ENCODE measurements at regions of chr15 and their contacts with region 1.

Region 1: DNA sequence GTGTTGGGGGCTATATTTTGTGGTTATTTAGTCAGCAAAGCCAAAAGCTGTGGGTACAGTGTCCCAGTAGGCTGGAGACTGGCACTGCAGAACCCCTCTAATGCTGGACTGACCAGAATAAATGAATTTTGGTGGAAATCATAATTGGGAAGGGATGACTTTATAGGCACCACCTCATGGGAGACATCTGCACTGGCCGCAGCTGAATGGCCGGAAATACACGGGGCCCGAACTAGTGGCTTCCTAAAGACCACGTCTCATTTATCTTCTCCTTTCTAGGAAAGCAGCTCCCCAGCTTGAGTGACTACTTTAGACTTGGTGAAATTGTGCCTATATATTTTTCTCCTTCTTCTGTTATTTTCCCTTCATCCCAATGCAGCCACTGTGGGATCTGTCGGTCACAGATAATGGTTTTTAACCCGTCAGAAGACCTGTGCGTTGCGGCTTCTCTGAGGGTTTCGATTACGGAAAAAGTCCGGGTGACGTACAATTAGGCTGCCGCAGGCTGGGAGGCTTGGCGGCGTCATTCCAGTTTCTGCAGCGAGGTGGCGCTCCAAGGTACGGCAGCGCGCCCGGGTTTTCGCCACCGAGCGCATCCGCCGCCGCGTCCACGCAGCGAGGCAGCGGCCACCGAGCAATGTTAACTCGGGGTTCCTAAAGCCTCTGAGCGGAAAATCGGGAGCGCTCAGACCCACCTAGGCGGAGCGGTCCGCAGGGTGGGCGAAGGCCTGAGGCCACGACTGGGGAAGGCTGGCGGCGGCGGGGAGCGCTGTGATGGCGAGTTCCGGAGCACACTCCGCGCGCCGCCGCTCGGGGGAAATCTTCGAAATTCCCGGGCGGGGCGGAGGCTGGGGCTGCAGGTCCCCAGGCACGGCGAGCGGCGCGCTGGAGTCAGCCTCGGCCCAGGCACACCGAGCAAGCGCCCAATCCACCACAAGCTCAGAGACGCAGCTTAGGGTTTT is 26.3 kb downstream of the NR2F2 start:
- DNase-seq: peak; percentile 96
- H3K4me3 Mint-ChIP-seq: no peak overlapping the region
- H3K27ac Mint-ChIP-seq: no peak overlapping the region
- H3K4me1 Mint-ChIP-seq: peaks cover 32% of the 10 kb centered on the region
- H3K27me3 Mint-ChIP-seq: no peaks in the 10 kb centered on the region
- CTCF ChIP-seq: peak; percentile 97

Region 2: GRCh38 chr15:95025924-95026728 is 1330.6 kb before region 1 on chr15:
- CTCF ChIA-PET with region 1: interaction called, 3 read pairs
- intact Hi-C with region 1: loop called (anchors 2 kb)
- DNase-seq: peak; percentile 78
- H3K4me3 Mint-ChIP-seq: no peak overlapping the region
- H3K27ac Mint-ChIP-seq: no peak overlapping the region
- H3K4me1 Mint-ChIP-seq: peaks cover 7% of the 10 kb centered on the region
- H3K27me3 Mint-ChIP-seq: no peaks in the 10 kb centered on the region
- CTCF ChIP-seq: peak; percentile 75

Region 3: DNA sequence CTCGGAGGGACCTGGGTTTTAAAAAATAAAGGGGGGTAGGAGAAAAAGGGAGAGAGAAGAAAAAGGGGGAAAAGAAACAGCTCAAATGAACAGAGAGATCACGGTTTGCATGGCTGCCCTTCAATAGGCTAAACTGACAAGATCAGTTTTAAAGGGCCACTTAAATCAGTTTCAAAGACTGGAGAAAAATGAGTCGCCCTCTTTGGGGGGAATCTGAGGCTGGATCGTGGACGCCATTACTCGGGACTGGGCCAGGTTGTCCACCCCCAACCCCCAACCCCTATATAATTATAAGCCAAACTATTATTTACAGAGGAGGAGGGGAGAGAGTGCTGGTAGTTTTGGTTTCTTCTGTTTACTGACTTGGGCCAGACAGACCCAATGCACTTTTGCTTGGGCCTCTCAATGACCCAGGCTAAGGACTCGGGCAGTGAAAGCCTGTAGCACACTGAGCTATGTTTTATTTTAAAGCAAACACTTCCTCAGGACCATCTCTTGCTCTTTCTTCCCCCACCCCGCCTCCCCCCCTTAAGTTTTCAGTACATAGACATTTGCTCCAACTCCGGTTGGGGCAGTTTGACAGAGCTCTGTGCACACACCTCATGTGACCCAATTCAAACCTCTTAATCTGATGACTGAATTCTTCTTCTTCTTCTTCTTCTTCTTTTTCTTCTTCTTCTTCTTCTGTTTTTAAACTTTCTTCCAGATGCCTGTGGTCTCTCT is 20.0 kb before region 1 on chr15:
- CTCF ChIA-PET with region 1: interaction called, 5 read pairs
- intact Hi-C with region 1: loop called (anchors 2 kb)
- DNase-seq: no peak
- H3K4me3 Mint-ChIP-seq: no peak overlapping the region
- H3K27ac Mint-ChIP-seq: no peak overlapping the region
- H3K4me1 Mint-ChIP-seq: peaks cover 9% of the 10 kb centered on the region
- H3K27me3 Mint-ChIP-seq: no peaks in the 10 kb centered on the region
- CTCF ChIP-seq: no peak

Region 4: DNA sequence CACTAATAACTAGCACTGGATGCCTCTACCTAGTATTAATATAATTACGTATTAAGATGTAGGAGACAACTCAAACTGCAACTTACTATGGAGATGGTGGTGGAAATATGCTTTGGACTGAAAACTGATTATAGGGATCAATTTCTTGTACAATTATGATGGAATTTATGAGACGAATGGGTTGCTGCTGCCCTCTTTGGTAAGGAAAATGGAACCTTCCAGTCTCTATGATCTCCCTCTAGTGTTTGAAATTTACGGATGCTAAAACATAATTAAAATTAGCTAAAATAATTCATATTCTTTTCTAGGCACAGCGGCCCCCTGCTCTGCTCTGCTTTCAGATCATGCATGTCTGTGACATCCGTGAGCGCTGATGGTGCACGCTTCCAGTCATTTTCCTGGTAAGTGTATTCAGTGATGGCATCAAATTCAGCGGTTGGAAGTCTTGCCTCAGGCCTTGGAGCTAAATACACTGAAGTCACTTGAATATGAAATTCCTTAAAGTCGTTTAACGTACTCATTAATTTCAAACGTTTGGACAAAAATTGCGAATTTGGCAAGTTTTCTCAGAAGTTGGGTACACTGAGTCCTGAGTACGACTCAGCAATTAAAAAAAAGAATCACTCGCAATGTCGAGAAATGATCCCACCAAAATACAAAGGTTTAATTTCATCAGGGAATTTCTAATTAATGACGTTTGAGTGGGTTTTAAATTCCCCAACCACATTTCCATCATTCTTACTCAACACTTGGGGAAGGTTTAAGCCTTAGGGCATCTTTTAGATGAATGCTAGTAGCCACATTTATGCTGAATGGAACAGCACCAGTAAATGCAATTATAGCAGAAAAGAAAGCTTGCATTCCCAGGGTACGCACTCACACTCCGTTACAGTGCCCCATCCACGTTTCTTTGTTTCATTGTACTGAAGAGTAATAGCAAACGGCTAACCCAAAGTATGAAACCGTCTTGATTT is 106.3 kb after region 1 on chr15:
- CTCF ChIA-PET with region 1: no interaction called
- intact Hi-C with region 1: loop called (anchors 5 kb)
- DNase-seq: no peak
- H3K4me3 Mint-ChIP-seq: no peak overlapping the region
- H3K27ac Mint-ChIP-seq: no peak overlapping the region
- H3K4me1 Mint-ChIP-seq: peaks cover 11% of the 10 kb centered on the region
- H3K27me3 Mint-ChIP-seq: no peaks in the 10 kb centered on the region
- CTCF ChIP-seq: peak; percentile 28

Region 5: DNA sequence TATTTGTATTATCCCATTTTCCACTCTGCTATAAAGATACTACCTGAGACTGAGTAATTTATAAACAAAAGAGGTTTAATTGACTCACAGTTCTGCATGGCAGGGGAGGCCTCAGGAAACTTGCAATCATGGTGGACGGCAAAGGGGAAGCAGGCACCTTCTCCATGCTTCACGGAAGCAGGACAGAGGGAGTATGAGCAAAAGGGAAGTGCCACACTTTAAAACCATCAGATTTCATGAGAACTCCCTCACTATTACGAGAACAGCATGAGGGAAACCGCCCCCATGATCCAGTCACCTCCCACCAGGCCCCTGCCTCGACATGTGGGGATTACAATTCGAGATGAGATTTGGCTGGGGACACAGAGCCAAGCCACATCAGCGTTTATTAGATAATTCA is 146.5 kb after region 1 on chr15:
- CTCF ChIA-PET with region 1: no interaction called
- intact Hi-C with region 1: no loop called
- DNase-seq: no peak
- H3K4me3 Mint-ChIP-seq: no peak overlapping the region
- H3K27ac Mint-ChIP-seq: no peak overlapping the region
- H3K4me1 Mint-ChIP-seq: peaks cover under 1% of the 10 kb centered on the region
- H3K27me3 Mint-ChIP-seq: no peaks in the 10 kb centered on the region
- CTCF ChIP-seq: no peak

Region 6: GRCh38 chr15:96585484-96586386 is 229.0 kb after region 1 on chr15:
- CTCF ChIA-PET with region 1: interaction called, 4 read pairs
- intact Hi-C with region 1: loop called (anchors 1 kb)
- DNase-seq: no peak
- H3K4me3 Mint-ChIP-seq: no peak overlapping the region
- H3K27ac Mint-ChIP-seq: no peak overlapping the region
- H3K4me1 Mint-ChIP-seq: peaks cover 9% of the 10 kb centered on the region
- H3K27me3 Mint-ChIP-seq: no peaks in the 10 kb centered on the region
- CTCF ChIP-seq: peak; percentile 44

Region 7: DNA sequence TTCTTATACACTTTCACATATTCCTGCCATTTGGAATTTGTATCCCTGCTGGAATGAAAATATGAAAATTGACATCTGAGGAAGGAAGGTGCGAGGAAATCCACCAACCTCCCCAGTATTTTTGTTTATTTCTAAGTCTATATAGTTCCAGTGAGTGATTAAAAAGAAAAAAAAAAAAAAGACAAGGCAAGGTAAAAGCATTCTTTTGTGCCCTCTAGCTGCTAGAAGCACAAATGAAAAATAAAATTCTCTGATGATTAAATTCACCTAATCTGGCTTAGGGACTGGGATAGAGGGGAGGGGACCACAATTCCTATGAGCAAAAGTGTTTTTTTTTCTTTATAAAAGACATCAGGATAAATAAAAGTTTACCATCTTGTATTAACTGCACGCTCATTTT is 344.7 kb after region 1 on chr15:
- CTCF ChIA-PET with region 1: no interaction called
- intact Hi-C with region 1: loop called (anchors 2 kb)
- DNase-seq: no peak
- H3K4me3 Mint-ChIP-seq: no peak overlapping the region
- H3K27ac Mint-ChIP-seq: no peak overlapping the region
- H3K4me1 Mint-ChIP-seq: peaks cover 29% of the 10 kb centered on the region
- H3K27me3 Mint-ChIP-seq: no peaks in the 10 kb centered on the region
- CTCF ChIP-seq: no peak

Region 8: DNA sequence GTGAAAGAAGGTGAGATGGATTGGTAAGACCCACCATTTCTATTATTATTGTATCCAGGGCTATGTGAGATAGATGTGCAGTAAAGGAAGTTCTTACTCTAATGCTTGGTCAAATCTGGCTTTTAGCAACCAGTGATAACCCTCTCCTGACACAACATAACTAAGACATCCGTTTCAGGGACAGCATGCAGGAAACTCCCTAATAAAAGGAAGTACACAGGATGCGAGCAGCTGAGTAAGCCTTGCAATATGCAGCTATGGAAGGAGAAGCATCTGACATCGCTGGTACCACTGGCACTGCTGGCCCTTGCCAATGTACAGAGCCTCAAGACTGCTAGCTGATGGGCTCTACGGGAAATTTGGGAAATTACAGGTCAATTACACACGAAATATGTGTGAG is 636.0 kb after region 1 on chr15:
- CTCF ChIA-PET with region 1: no interaction called
- intact Hi-C with region 1: no loop called
- DNase-seq: no peak
- H3K4me3 Mint-ChIP-seq: no peak overlapping the region
- H3K27ac Mint-ChIP-seq: no peak overlapping the region
- H3K4me1 Mint-ChIP-seq: no peaks in the 10 kb centered on the region
- H3K27me3 Mint-ChIP-seq: no peaks in the 10 kb centered on the region
- CTCF ChIP-seq: no peak

Region 9: DNA sequence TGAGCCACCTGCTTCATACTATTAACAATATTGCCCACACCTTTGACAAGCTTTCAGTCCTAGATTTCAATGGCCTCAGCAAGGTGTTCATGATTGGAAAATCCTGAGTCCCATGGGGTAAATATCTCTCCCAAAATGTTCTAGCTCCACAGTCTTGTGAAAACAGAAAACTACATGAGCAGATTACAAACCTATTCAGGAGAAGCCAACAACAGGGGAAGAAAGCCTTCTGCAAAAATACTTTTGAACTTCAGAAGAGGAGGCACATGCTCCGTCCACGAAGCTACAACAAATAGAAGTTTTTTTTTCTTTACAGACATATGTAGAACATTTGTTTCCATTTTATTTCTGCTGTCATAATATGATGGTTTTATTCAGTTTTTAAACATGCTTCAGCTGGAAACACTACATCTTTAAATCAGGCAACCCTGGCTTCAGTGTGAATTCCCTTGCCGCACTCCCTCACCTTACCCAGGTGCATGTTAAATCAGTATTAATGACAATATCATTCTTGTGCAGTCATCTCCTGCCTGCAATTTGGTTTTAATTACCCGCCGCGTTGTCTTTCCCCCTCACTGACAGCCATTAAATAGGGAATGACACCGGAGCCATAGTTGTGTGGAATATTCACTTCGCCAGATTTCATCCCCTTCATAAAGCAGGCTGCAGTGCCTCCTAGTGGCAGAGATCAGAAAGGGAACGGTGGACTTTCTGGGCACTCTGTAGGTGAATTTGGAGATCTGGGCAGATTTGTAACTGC is 878.3 kb after region 1 on chr15:
- CTCF ChIA-PET with region 1: no interaction called
- intact Hi-C with region 1: loop called (anchors 1 kb)
- DNase-seq: peak; percentile 76
- H3K4me3 Mint-ChIP-seq: peak overlapping the region; percentile 31
- H3K27ac Mint-ChIP-seq: peak overlapping the region; percentile 60
- H3K4me1 Mint-ChIP-seq: peaks cover 26% of the 10 kb centered on the region
- H3K27me3 Mint-ChIP-seq: no peaks in the 10 kb centered on the region
- CTCF ChIP-seq: peak; percentile 95